ENCODE measurements at regions of chr3 and their contacts with region 1.

Region 1: DNA sequence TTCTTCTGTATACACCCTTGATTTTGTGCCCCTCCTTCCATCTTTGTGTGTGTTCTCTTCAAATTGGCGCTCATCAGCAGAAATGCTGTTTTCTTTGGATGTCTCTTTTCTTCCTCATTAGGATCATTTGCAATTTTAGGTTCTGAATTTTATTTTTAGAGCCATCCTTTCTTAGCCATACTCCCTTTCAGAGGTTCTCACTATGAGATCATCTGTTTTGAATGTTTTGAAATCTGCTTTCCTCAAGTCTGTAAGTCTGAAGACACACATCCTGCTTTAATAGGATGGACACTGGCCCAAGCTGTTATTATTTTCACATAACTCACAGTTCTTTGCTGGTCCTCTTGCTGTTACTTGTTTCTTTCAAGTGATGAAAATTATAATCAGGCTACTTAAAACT is 124.8 kb downstream of the BDH1 start:
- DNase-seq: no peak
- ATAC-seq: peak; percentile 55

Region 2: DNA sequence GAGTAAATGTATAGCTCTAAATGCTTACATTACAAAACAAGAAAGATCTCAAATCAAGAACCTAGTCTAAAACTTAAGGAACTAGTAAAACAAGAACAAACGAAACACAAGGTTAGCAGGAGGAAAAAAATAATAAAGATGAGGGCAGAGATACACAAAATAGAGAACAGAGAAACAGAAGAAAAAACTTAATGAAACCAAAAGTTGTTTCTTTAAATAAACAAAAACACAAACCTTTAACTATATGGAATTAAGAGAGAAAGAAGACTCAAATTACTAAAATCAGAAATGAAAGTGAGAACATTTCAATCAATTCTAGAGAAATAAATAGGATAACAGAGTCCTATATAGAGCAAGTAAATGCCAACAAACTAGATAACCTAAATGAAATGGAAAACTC is 192.1 kb before region 1 on chr3:
- intact Hi-C with region 1: no loop called
- DNase-seq: no peak
- ATAC-seq: no peak

Region 3: GRCh38 chr3:197256836-197257444 is 174.0 kb before region 1 on chr3:
- intact Hi-C with region 1: no loop called
- DNase-seq: no peak
- ATAC-seq: no peak

Region 4: DNA sequence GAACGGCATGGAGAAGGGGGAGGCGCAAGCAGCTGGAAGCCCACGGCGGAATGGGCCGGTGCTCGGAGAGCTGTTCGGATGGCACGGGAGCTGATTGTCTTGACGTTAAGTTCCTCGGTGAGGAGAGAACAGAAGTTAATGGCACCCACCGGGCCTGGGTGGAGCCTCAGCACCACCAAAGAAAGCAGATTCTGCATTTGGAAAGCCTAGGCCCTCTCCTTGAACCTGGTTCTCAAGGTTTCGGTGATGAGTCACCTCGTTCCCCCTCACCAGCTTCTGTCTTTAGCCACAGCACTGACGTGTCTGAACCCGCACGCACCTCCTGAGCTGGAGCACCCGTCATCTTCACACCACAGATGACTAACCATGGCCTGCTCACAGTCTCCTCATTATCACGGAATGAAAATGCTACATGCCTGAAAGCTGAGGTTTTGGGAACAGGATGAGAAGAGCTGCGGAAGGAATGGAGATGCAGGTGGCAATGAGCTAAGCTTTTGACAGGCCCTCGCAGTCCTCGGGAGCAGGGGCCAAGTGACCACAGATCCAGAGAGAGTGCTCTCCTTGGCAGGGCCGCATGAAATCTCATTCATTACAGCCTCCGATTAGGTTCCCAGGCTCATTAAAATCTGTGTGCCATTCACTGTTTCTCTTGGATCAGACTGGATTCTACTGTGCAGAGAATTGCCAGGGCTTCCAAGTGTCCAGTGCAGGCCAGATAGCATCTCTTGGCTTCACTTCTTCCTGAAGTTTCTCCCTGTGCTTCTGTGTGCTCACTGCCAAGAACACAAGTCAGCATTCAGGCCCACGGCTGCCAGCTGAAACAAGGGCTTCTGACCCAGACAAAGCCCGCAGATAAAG is 36.2 kb before region 1 on chr3:
- intact Hi-C with region 1: loop called (anchors 5 kb)
- DNase-seq: peak; percentile 83
- ATAC-seq: peak; percentile 93